ENCODE measurements at regions of chr1 and their contacts with region 1.

Region 1: DNA sequence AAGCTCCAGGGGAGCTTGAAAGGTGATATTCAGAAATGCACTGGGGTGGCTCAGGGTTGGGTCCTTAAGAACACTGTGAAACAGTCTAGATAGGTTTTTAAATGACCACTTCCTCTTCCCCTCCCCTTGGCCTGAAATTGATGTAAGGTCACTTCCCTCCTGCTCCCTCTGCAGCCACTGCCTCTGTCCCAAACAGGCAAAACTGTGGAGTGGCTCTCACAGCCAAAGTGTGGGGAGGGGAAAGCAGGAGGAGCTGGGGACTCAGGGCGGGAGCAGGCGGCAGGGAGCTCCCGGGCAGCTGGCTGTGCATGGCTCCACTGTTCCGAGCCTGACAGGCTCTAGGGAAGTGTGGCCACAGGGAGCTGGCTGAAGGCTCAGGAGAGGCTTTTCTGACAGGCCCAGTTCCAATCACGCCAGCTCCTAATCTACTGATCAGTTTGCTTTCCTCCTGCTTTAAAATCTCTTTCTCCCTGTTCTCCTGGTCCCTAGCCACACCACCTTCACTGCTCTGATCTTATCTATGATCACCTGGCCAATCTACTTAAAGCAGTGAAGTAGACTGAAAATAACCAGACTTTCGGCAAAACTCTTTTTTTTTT is 5.1 kb upstream of the CSRP1 start:
- DNase-seq: no peak
- ATAC-seq: no peak
- H3K4me3 Mint-ChIP-seq: no peak overlapping the region
- H3K27ac Mint-ChIP-seq: no peak overlapping the region
- H3K4me1 Mint-ChIP-seq: peaks cover 48% of the 10 kb centered on the region
- H3K27me3 Mint-ChIP-seq: no peaks in the 10 kb centered on the region

Region 2: DNA sequence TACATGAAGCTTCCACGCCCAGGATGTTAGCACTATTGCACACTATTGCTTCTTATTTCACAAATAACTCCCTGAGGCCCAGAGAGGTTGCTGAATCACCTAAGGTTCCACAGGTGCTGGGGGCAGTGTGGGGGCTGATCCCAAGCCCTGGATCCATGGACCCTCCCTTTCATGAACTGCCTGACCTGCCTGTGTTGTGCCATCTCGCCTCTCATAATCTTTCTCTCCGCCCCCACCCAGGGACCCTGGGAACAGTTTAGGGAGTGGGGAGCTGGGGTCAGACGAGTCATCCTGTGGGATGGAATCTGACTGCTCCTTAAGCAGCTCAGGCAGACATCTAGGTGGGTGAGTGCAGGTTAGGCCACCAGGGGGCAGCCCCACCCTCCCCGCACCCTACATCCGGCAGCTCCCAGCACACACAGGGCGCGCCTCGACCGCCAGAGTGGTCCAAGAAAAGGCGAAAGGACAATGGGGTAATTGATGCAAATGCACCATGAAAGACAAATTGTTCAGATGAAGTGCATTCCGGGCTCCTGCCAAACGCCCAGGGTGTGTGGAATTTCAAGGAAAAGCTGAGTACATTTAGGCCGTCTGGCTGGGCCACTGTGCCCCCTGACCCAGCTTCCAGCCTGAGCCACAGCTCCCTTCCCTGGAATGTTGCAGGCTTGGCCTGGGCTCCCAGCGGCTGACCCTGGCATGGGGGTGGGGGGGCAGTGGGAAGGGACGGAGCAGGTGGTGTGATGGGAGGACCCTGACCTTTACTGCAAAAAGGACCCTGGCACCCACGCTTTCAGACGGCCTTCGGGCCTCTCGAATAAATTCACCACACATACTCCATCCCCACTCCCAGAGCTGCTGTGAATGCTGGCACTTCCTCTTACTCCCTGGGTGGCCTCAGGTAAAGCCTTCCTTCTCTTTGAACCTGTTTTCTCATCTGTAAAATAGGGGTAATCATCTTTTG is 63.8 kb before region 1 on chr1:
- CTCF ChIA-PET with region 1: interaction called, 135 read pairs
- DNase-seq: peak; percentile 81
- ATAC-seq: peak; percentile 97
- H3K4me3 Mint-ChIP-seq: no peak overlapping the region
- H3K27ac Mint-ChIP-seq: no peak overlapping the region
- H3K4me1 Mint-ChIP-seq: peaks cover 21% of the 10 kb centered on the region
- H3K27me3 Mint-ChIP-seq: peaks cover 49% of the 10 kb centered on the region

Region 3: DNA sequence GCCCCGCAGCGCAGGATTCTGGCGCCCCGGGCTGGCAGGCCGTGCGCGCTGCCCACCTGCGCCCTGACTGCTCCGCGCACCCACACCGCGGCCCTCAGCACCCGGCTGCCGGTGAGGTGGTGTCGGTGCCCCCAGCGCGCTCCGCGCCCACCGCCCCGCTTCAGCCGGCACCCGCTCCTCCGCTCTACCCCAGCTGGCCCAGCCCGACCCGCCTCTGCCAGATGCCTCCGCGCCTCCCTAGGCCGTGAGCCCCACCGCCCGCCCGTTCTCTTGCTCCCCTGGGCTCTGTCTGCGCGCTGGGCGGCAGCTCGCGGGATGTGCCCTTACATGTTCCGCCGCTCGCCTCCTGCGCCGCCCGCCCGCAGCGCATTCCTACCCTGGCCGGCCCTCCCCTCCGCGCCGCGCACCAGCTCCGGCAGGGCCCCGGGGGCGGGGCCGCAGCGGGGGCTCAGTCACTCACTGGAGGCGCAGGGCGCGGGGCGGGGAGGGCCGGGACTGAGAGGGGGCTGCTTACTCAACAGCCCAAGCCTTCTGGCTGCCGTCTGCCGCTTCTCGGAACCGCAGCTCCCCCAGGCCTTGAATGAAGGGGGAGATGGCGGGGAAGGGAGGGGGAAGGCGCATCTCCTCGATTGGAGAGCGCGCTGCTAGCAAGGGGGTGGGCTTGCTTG is 43.1 kb before region 1 on chr1 and contains the start of gene PHLDA3:
- CTCF ChIA-PET with region 1: interaction called, 25 read pairs
- DNase-seq: peak; percentile 71
- ATAC-seq: peak; percentile 85
- H3K4me3 Mint-ChIP-seq: peak within 1 kb of the TSS; percentile 76
- H3K27ac Mint-ChIP-seq: peak within 1 kb of the TSS; percentile 54
- H3K4me1 Mint-ChIP-seq: peaks cover 18% of the 10 kb centered on the region
- H3K27me3 Mint-ChIP-seq: peaks cover 39% of the 10 kb centered on the region
- total RNA-seq, gene PHLDA3: 12.9 to 23.5 TPM

Region 4: DNA sequence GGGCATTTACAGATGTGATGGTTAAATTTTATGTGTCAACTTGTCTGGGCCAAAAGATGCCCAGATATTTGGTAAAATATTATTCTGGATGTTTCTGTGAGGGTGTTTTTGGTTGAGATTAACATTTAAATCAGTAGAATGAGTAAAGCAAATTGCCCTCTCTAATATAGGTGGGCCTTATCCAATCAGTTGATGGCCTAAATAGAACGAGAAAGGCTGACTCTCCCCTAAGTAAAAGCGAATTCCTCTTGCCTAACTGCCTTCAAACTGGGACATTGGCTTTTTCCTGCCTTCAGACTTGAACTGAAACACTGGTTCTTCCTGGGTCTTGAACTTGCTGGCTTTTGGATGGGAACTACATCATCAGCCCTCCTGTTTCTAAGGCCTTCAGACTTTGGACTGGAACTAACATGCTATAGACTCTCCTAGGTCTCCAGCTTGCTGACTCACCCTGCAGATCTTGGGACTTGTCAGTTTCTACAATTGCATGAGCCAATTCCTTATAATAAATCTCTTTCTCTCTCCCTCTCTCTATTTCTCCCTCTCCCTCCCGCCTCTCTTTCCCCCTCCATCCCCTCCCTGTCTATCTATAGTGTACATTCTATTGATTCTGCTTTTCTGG is 16.7 kb after region 1 on chr1:
- CTCF ChIA-PET with region 1: interaction called, 25 read pairs
- DNase-seq: no peak
- ATAC-seq: no peak
- H3K4me3 Mint-ChIP-seq: no peak overlapping the region
- H3K27ac Mint-ChIP-seq: no peak overlapping the region
- H3K4me1 Mint-ChIP-seq: no peaks in the 10 kb centered on the region
- H3K27me3 Mint-ChIP-seq: no peaks in the 10 kb centered on the region

Region 5: DNA sequence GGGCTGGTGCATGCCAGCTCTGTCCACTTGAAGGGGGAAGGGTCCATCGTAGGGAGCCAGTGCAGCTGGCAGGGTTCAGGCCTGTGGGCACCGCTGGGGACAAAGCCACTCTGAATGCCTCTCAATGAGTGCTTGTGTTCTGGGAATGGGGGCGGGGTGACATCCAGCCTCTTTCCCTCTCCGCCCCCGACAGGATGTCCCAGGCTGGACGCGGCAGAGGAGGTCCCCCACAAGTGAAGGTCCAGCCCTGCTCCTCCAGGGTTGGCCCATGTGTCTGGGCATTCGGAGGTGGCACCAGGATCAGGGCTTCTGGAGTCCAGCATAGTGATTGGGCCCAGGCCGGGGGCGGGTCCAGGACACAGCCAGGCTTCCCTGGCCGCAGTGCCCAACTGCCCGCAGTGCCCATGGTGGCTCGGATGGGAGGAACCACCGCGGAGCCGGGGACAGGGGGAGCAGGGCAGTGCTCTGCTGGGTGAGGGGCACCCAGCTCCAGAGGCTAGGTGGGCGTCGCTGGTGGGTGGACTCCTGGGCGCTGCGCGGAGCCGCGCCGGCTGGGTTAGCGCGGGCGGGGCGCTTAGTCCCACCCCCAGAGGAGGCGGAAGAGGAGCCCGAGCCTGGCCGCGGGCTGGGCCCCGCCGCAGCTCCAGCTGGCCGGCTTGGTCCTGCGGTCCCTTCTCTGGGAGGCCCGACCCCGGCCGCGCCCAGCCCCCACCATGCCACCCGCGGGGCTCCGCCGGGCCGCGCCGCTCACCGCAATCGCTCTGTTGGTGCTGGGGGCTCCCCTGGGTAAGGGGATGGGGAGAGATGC is 376.4 kb after region 1 on chr1 and contains the start of gene SHISA4:
- CTCF ChIA-PET with region 1: no interaction called
- DNase-seq: no peak
- ATAC-seq: peak; percentile 69
- H3K4me3 Mint-ChIP-seq: peak within 1 kb of the TSS; percentile 19
- H3K27ac Mint-ChIP-seq: no peak within 1 kb of the TSS
- H3K4me1 Mint-ChIP-seq: peaks cover 4% of the 10 kb centered on the region
- H3K27me3 Mint-ChIP-seq: peaks cover 55% of the 10 kb centered on the region
- total RNA-seq, gene SHISA4: 0.32 to 0.54 TPM